ENCODE measurements at regions of chr3 and their contacts with region 1.

Region 1: GRCh38 chr3:149547938-149548668 is 73.6 kb downstream of the TM4SF4 start:
- DNase-seq: peak; percentile 86
- H3K4me3 Mint-ChIP-seq: peak overlapping the region; percentile 66
- H3K27ac Mint-ChIP-seq: peak overlapping the region; percentile 94
- H3K4me1 Mint-ChIP-seq: peaks cover 18% of the 10 kb centered on the region
- H3K27me3 Mint-ChIP-seq: no peaks in the 10 kb centered on the region
- CTCF ChIP-seq: no peak

Region 2: DNA sequence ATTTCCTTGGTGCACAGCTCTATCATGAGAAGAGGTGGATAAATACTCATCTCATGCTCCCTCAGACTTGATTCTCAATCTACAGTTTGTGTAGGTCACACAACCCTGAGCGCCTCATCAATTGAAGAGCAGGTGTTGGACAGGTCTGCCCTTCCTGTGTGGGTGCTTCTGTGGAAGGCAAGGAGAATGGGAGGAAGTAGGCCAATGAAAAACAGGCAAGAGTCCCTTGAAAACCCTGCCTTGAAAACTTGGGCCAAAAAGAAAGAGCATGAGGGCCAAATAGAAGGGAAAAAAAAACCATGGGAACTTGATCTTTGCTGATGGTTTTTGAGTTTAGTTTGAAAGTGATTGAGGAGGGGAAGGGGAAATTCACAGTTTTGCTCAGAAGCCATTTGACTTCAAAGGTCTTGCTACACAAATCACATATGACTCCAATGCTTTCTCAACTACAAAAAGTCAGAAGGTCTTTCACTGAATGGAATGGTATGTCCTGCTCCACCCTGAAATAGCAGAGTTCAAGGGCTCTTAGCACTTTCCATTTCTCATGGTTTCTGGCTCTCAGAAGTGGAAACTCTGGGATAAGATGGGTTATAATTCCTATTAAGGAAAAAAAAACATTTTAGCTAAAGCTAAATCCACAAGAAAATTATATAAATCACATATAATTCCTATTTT is 133.4 kb before region 1 on chr3:
- CTCF ChIA-PET with region 1: no interaction called
- POLR2A ChIA-PET with region 1: no interaction called
- intact Hi-C with region 1: no loop called
- DNase-seq: no peak
- H3K4me3 Mint-ChIP-seq: no peak overlapping the region
- H3K27ac Mint-ChIP-seq: peak overlapping the region; percentile 63
- H3K4me1 Mint-ChIP-seq: peaks cover 12% of the 10 kb centered on the region
- H3K27me3 Mint-ChIP-seq: no peaks in the 10 kb centered on the region
- CTCF ChIP-seq: no peak

Region 3: DNA sequence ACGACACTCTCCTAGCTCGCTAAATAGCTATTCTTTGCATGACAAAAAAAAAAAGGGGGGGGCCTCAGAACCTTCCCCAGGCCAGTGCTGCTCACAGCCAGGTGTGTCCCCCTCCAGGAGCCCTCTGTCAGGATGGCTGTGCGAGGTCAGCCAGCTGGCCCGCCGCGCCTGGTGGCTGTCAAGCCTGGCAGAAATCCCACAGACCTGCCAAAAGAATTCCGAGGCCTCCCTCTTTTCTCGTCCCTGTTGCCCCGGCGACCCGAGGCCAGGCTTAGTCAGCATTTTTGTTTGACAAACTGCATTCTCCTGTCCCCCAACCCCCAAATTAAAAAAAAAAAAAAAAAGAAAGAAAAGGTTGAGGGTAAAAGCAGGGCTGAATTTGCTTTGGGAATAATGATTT is 11.7 kb before region 1 on chr3:
- CTCF ChIA-PET with region 1: interaction called, 12 read pairs
- POLR2A ChIA-PET with region 1: no interaction called
- intact Hi-C with region 1: no loop called
- DNase-seq: peak; percentile 27
- H3K4me3 Mint-ChIP-seq: peak overlapping the region; percentile 31
- H3K27ac Mint-ChIP-seq: peak overlapping the region; percentile 67
- H3K4me1 Mint-ChIP-seq: peaks cover 48% of the 10 kb centered on the region
- H3K27me3 Mint-ChIP-seq: no peaks in the 10 kb centered on the region
- CTCF ChIP-seq: no peak